ENCODE measurements at regions of chr1 and their contacts with region 1.

Region 1: DNA sequence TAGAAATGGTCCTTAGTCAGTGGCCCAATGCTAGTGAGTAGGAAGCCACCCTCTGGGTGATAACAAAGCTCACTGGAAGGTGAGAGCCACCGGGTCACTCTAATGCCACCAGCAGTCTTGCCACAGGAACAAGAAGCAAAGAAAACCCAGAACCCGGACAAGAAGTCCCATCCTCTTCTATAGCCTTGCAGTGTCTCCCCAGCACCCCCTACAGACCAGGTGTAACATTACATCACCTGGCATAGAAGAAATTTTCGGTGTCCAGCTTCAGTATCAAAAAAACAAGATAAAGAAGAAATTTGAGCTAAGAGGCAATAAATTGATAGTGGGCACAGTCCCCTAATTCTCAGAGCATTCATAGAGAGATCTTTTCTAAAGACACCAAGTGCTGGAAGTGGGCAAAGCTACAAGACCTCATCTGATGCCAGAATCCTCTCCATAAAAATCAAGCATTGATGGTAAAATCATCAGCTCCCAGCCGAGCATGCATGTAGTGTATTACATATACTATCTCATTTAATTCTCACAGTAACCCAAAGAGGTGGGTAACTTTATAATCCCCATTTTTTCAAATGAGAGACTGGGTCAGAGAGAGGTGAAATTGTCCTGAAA is 491.0 kb downstream of the MATN1 start:
- DNase-seq: peak in 1 of 2 experiments; percentile 58
- H3K4me3 ChIP-seq: no peak overlapping the region
- H3K27ac ChIP-seq: no peak overlapping the region
- H3K4me1 ChIP-seq: no peaks in the 10 kb centered on the region
- H3K27me3 ChIP-seq: no peaks in the 10 kb centered on the region
- CTCF ChIP-seq: peak; percentile 51 to 83 (median 61)
- EP300 ChIP-seq: no peak
- POLR2A ChIP-seq: no peak
- RAD21 ChIP-seq: peak; percentile 74 to 77

Region 2: GRCh38 chr1:30242722-30243457 is 10.5 kb after region 1 on chr1:
- CTCF ChIA-PET with region 1: interaction called, 31 read pairs
- POLR2A ChIA-PET with region 1: no interaction called
- DNase-seq: no peak
- H3K4me3 ChIP-seq: no peak overlapping the region
- H3K27ac ChIP-seq: no peak overlapping the region
- H3K4me1 ChIP-seq: 0 out of 7 replicates have a peak, but pooled peaks cover 0 to 3% (median 0%) of the 10 kb centered on the region in 4 experiments
- H3K27me3 ChIP-seq: no peaks in the 10 kb centered on the region; a peak in 1 of 7 replicates
- CTCF ChIP-seq: no peak
- EP300 ChIP-seq: no peak
- POLR2A ChIP-seq: no peak
- RAD21 ChIP-seq: no peak

Region 3: DNA sequence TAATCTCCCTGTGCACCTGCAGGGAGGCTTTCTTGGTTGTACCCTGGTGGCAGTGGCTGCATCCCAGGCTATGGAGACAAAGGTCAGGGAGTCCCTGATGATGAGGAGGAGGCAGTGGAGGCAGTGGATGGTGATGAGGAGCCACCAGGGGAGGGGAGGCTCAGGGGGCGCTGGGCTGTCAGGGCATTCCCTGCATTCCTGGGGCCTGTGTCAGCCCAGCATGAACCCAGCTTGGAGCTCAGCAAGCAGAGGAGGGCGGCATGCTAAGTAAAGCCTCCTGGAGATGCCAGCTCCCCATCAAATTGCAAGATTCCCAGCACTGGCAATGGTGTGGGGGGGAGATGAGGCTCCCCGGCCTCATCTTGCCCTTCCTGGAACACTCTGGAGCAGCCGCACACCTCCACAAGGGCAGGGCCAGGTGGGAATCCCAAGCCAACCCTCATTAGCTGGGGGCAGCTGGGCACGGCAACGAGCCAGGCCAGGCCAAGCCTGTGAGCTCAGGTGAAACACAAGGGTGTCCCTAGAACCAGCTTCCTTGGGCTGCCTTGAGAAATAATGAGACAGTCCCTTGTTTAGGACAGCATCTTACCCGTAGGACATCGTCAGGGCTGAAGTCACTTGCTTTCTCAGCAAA is 21.5 kb after region 1 on chr1:
- CTCF ChIA-PET with region 1: interaction called, 38 read pairs
- POLR2A ChIA-PET with region 1: no interaction called
- DNase-seq: no peak
- H3K4me3 ChIP-seq: no peak overlapping the region
- H3K27ac ChIP-seq: no peak overlapping the region; the same call in 1 of the 2 replicates
- H3K4me1 ChIP-seq: peaks cover 0 to 8% (median 4%) of the 10 kb centered on the region in 4 experiments; a peak in 4 of 7 replicates
- H3K27me3 ChIP-seq: no peaks in the 10 kb centered on the region; a peak in 1 of 7 replicates
- CTCF ChIP-seq: no peak
- EP300 ChIP-seq: no peak
- POLR2A ChIP-seq: no peak
- RAD21 ChIP-seq: no peak

Region 4: DNA sequence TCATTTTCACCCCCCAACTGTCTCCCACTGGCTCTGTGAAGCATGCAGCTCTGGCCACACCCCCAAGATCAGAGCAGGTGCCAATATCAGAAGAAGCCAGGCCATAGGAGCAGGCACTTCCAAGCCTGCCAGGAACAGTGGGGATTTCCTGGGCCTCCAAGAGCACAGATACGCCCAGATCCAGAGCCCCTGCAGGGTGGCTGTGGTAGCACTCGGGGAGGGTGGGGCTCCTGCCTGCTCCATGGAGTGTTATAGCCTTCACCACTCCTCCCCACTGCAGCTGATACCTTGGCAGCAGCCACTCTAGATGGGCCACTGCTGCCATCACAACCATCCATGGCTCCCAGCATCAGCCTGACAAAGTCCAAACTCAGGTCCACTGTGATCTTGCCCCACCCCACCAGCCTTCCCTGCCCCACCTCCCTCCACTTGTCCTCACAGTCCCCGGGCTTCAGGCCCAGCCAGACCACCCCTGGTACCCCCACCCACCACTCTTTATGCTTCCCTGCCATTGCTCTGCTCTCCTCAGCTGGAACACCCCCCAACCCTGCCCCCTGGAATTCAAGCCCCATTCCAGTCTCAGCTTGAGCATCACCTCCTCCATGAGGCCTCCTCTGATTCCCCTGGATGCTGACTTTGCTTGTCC is 42.7 kb after region 1 on chr1:
- CTCF ChIA-PET with region 1: interaction called, 10 read pairs
- POLR2A ChIA-PET with region 1: no interaction called
- DNase-seq: peak in 1 of 2 experiments; percentile 35
- H3K4me3 ChIP-seq: no peak overlapping the region
- H3K27ac ChIP-seq: no peak overlapping the region
- H3K4me1 ChIP-seq: no peaks in the 10 kb centered on the region
- H3K27me3 ChIP-seq: no peaks in the 10 kb centered on the region; a peak in 1 of 7 replicates
- CTCF ChIP-seq: no peak
- EP300 ChIP-seq: no peak
- POLR2A ChIP-seq: no peak
- RAD21 ChIP-seq: no peak

Region 5: GRCh38 chr1:30286241-30286987 is 54.0 kb after region 1 on chr1:
- CTCF ChIA-PET with region 1: interaction called, 11 read pairs
- POLR2A ChIA-PET with region 1: no interaction called
- DNase-seq: peak in 1 of 2 experiments; percentile 42
- H3K4me3 ChIP-seq: no peak overlapping the region
- H3K27ac ChIP-seq: no peak overlapping the region
- H3K4me1 ChIP-seq: no peaks in the 10 kb centered on the region
- H3K27me3 ChIP-seq: no peaks in the 10 kb centered on the region
- CTCF ChIP-seq: no peak
- EP300 ChIP-seq: no peak
- POLR2A ChIP-seq: no peak
- RAD21 ChIP-seq: no peak